ENCODE measurements at regions of chr1 and their contacts with region 1.

Region 1: GRCh38 chr1:204296431-204296988 is 63.2 kb downstream of the PLEKHA6 start:
- DNase-seq: peak; percentile 61
- H3K4me3 ChIP-seq: no peak overlapping the region
- H3K27ac ChIP-seq: peak overlapping the region in 2 of 4 donors; percentile 18 to 25
- H3K4me1 ChIP-seq: peaks cover 0 to 18% (median 2%) of the 10 kb centered on the region in 4 donors
- H3K27me3 ChIP-seq: peaks cover 0 to 17% (median 0%) of the 10 kb centered on the region in 3 donors
- CTCF ChIP-seq: no peak
- EP300 ChIP-seq: no peak
- POLR2A ChIP-seq: no peak

Region 2: GRCh38 chr1:204323887-204324286 is 27.4 kb after region 1 on chr1:
- intact Hi-C with region 1: no loop called
- DNase-seq: no peak
- H3K4me3 ChIP-seq: no peak overlapping the region
- H3K27ac ChIP-seq: no peak overlapping the region
- H3K4me1 ChIP-seq: peaks cover 0 to 24% (median 15%) of the 10 kb centered on the region in 4 donors
- H3K27me3 ChIP-seq: no peaks in the 10 kb centered on the region
- CTCF ChIP-seq: no peak
- EP300 ChIP-seq: no peak
- POLR2A ChIP-seq: no peak

Region 3: DNA sequence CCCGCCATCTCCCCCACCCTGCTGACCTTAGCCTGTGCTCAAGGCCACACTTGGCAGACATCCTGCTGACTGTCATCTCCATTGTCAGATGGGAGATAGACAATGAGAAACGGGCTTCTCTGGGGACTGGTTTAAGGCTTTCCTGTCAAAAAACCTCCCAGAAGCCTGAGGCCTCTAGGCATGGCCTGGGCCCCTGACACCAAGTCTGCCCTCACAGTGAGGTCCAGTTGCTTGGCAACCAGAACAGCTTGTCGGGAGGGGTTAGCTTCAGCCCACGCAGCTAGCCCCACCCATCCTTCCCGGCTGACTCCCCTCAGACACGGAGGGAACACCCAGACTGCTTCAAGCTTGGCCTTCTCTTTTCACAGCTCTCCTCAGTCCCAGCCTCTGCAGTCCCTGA is 52.2 kb after region 1 on chr1:
- intact Hi-C with region 1: loop called (anchors 10 kb)
- DNase-seq: peak; percentile 84
- H3K4me3 ChIP-seq: no peak overlapping the region
- H3K27ac ChIP-seq: peak overlapping the region; percentile 43 to 57 (median 51)
- H3K4me1 ChIP-seq: peaks cover 0 to 19% (median 10%) of the 10 kb centered on the region in 4 donors
- H3K27me3 ChIP-seq: peaks cover 0 to 13% (median 0%) of the 10 kb centered on the region in 3 donors
- CTCF ChIP-seq: no peak
- EP300 ChIP-seq: no peak
- POLR2A ChIP-seq: no peak